H1 (cell line): ENCODE measurements at regions of chr2 and their contacts with region 1.

Region 1: GRCh38 chr2:79235135-79235534 is 75.6 kb upstream of the REG3A start:
- DNase-seq: no peak
- H3K4me3 ChIP-seq: no peak overlapping the region
- H3K27ac ChIP-seq: no peak overlapping the region
- H3K4me1 ChIP-seq: no peaks in the 10 kb centered on the region
- H3K27me3 ChIP-seq: no peaks in the 10 kb centered on the region
- CTCF ChIP-seq: peak in 2 of 3 experiments; percentile 62 to 69; a peak in 3 of 4 replicates
- EP300 ChIP-seq: no peak
- POLR2A ChIP-seq: no peak
- RAD21 ChIP-seq: peak; percentile 76 to 79

Region 2: GRCh38 chr2:79200762-79201161 is 34.4 kb before region 1 on chr2:
- CTCF ChIA-PET with region 1: no interaction called
- POLR2A ChIA-PET with region 1: no interaction called
- DNase-seq: no peak
- H3K4me3 ChIP-seq: peak overlapping the region in 1 of 4 experiments; percentile 19; a peak in 1 of 8 replicates
- H3K27ac ChIP-seq: no peak overlapping the region
- H3K4me1 ChIP-seq: peaks cover 0 to 4% (median 1%) of the 10 kb centered on the region in 4 experiments; a peak in 3 of 7 replicates
- H3K27me3 ChIP-seq: no peaks in the 10 kb centered on the region
- CTCF ChIP-seq: no peak
- EP300 ChIP-seq: no peak
- POLR2A ChIP-seq: no peak
- RAD21 ChIP-seq: no peak

Region 3: GRCh38 chr2:79219383-79219988 is 15.6 kb before region 1 on chr2:
- CTCF ChIA-PET with region 1: interaction called, 15 read pairs
- POLR2A ChIA-PET with region 1: no interaction called
- DNase-seq: peak in 1 of 2 experiments; percentile 66
- H3K4me3 ChIP-seq: no peak overlapping the region
- H3K27ac ChIP-seq: no peak overlapping the region
- H3K4me1 ChIP-seq: no peaks in the 10 kb centered on the region
- H3K27me3 ChIP-seq: no peaks in the 10 kb centered on the region
- CTCF ChIP-seq: peak in 2 of 3 experiments; percentile 73 to 75; a peak in 3 of 4 replicates
- EP300 ChIP-seq: no peak
- POLR2A ChIP-seq: no peak
- RAD21 ChIP-seq: peak; percentile 91 to 93

Region 4: DNA sequence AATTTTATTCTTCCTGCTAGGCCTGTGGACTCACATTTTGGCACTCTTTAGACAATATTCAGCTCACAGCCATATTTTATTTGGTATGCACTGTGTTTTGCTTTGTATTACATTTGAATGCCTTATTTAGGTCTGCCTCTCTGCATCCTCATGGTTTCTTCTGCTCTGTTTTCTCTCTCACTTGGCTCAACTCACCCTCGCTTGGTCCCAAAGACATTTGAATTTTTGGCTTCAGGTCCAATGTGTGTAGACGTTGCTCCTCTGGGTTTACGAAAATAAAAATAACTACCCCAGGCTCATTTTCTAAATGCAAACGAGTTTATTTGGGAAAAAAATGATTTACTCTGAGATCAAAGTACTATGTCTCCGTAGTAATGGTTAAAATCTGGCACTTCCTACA is 15.5 kb after region 1 on chr2:
- CTCF ChIA-PET with region 1: interaction called, 16 read pairs
- POLR2A ChIA-PET with region 1: no interaction called
- DNase-seq: no peak
- H3K4me3 ChIP-seq: no peak overlapping the region
- H3K27ac ChIP-seq: no peak overlapping the region
- H3K4me1 ChIP-seq: no peaks in the 10 kb centered on the region
- H3K27me3 ChIP-seq: no peaks in the 10 kb centered on the region
- CTCF ChIP-seq: no peak
- EP300 ChIP-seq: no peak
- POLR2A ChIP-seq: no peak
- RAD21 ChIP-seq: no peak

Region 5: GRCh38 chr2:79327460-79327859 is 92.3 kb after region 1 on chr2:
- CTCF ChIA-PET with region 1: no interaction called
- POLR2A ChIA-PET with region 1: no interaction called
- DNase-seq: no peak
- H3K4me3 ChIP-seq: no peak overlapping the region
- H3K27ac ChIP-seq: no peak overlapping the region
- H3K4me1 ChIP-seq: no peaks in the 10 kb centered on the region
- H3K27me3 ChIP-seq: no peaks in the 10 kb centered on the region
- CTCF ChIP-seq: peak in 1 of 3 experiments; percentile 43; a peak in 1 of 4 replicates
- EP300 ChIP-seq: no peak
- POLR2A ChIP-seq: no peak
- RAD21 ChIP-seq: peak; percentile 42 to 55

Region 6: GRCh38 chr2:79359419-79359818 is 124.3 kb after region 1 on chr2:
- CTCF ChIA-PET with region 1: no interaction called
- POLR2A ChIA-PET with region 1: no interaction called
- DNase-seq: no peak
- H3K4me3 ChIP-seq: no peak overlapping the region; a peak in 1 of 8 replicates
- H3K27ac ChIP-seq: no peak overlapping the region
- H3K4me1 ChIP-seq: no peaks in the 10 kb centered on the region; a peak in 3 of 7 replicates
- H3K27me3 ChIP-seq: no peaks in the 10 kb centered on the region
- CTCF ChIP-seq: no peak
- EP300 ChIP-seq: no peak
- POLR2A ChIP-seq: no peak
- RAD21 ChIP-seq: no peak

Region 7: DNA sequence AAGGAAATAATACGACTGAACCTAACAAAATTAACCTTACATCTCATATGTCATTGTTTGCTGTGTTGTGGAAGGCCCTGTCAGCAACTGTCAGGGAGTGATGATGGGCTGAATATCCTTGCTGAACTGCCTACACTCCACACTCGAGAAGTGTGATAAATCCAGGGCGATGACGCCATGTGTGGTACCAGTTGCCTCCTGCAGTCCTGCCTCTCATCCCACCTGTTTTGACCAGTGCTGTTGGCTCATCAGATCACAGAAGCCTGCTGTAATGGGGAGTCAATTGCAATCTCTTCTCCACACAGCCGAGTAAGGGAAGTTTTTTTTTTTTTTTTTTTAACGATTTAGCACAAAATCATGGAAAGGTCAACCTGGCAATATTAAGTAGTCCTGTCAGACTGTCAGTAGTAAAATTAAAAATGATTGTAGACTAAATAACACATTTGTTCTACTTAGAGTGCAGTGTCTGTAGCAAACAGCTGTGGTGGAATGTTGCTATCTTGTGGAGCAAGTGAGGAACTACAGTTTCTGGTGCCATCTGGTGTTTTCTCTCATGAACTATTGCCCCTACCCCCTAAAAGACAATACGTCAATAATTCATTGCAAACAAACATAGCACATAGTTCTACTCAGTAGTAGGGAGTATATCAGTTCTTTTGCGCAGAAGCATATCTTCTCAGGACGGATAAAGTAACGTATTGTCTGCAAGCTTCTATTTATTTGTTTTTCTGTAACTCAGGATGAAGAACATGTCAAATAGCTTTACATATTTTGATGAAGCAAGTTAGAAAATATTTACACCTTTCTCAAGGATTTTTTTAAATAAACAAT is 625.3 kb after region 1 on chr2:
- CTCF ChIA-PET with region 1: interaction called, 32 read pairs
- POLR2A ChIA-PET with region 1: no interaction called
- DNase-seq: no peak
- H3K4me3 ChIP-seq: no peak overlapping the region
- H3K27ac ChIP-seq: no peak overlapping the region
- H3K4me1 ChIP-seq: peaks cover under 1 to 6% (median 2%) of the 10 kb centered on the region in 4 experiments; a peak in 5 of 7 replicates
- H3K27me3 ChIP-seq: no peaks in the 10 kb centered on the region
- CTCF ChIP-seq: peak in 2 of 3 experiments; percentile 75 to 95; a peak in 3 of 4 replicates
- EP300 ChIP-seq: no peak
- POLR2A ChIP-seq: no peak
- RAD21 ChIP-seq: peak; percentile 92 to 94